Activated CD4-positive, alpha-beta T cell treated with anti-CD3 and anti-CD28 coated beads, Interleukin-2, amount 10 ng/mL, durations not matched to agents 24 days and 14 days (primary cell): ENCODE measurements at regions of chr2 and their contacts with region 1.

Region 1: DNA sequence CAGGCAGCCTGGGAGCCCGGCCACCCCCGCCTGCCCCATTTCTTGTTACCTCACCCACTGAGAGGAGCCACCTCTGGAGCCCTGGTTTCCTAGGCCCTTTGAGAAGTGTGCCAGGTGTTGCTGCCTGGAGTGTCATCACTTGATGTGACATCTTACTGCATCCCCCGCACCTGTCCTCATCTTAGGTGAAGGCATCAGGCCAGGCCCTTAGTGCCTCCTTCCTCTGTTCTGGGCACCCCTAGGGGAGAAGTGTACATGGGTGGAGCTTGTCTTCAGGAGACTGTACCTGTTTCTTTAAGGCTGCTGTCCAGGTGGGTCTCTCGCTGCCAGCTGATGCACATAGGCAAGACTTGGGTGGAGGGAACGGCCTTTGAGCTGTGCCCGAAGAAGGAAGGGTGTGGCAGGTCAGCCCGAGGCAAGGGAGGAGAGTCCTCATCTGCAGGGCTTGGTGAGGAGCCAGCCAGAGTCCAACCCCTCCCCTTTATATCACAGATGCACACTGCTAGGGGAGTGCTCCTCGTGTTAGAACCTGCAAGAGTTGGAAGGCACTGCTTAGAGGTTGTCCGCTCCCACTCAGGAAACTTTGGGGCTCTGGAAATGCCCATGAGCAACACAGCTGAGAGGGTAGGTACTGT is 45.9 kb downstream of the NCK2 start:
- DNase-seq: no peak
- H3K4me3 Mint-ChIP-seq: peak overlapping the region; percentile 78
- H3K27ac Mint-ChIP-seq: peak overlapping the region; percentile 91
- H3K4me1 Mint-ChIP-seq: peaks cover 80% of the 10 kb centered on the region
- H3K27me3 Mint-ChIP-seq: no peaks in the 10 kb centered on the region

Region 2: GRCh38 chr2:105775809-105776559 is 14.6 kb before region 1 on chr2:
- intact Hi-C with region 1: loop called (anchors 1 kb)
- DNase-seq: peak; percentile 81
- H3K4me3 Mint-ChIP-seq: peak overlapping the region; percentile 71
- H3K27ac Mint-ChIP-seq: peak overlapping the region; percentile 81
- H3K4me1 Mint-ChIP-seq: peaks cover 78% of the 10 kb centered on the region
- H3K27me3 Mint-ChIP-seq: no peaks in the 10 kb centered on the region

Region 3: GRCh38 chr2:105802587-105802986 is 12.0 kb after region 1 on chr2:
- intact Hi-C with region 1: loop called (anchors 1 kb)
- DNase-seq: peak; percentile 90
- H3K4me3 Mint-ChIP-seq: peak overlapping the region; percentile 68
- H3K27ac Mint-ChIP-seq: peak overlapping the region; percentile 93
- H3K4me1 Mint-ChIP-seq: peaks cover 81% of the 10 kb centered on the region
- H3K27me3 Mint-ChIP-seq: no peaks in the 10 kb centered on the region